ENCODE measurements at regions of chr16 and their contacts with region 1.

Region 1: DNA sequence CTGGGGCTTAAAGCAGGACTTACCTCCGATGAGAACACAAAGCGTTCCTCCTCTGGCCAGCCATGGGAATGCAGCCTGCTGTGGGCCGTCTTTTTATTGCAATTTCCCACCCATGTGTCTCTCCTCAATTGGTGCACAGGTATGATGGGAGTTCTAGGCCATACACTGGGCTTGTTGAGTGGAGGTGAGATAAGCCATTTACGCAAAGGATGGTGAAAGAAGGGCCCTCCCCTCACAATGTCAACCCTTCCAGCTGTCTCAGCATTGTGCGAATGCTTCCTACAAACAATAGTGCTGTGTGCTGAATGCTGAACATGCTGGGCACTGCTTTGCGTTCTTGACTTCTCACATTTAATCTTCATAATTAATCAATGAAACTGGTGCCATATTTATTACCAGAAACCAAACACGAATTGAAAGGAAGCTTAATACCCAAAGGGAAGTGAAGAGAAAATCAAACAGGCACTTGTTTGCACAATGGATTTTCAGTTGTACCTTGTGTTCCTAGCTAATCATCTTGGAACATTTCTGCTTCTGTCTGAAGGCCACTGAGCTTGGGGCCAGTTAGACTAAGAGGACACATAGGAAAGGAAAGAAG is at the start of gene GP2:
- DNase-seq: no peak
- H3K4me3 ChIP-seq: no peak within 1 kb of the TSS
- H3K27ac ChIP-seq: peak within 1 kb of the TSS in 1 of 4 donors; percentile 67
- H3K4me1 ChIP-seq: peaks cover 0 to 5% (median 0%) of the 10 kb centered on the region in 4 donors
- H3K27me3 ChIP-seq: no peaks in the 10 kb centered on the region
- CTCF ChIP-seq: no peak
- EP300 ChIP-seq: no peak
- POLR2A ChIP-seq: no peak
- total RNA-seq, gene GP2: 1.8 to 3.0 (median 2.8) TPM

Region 2: DNA sequence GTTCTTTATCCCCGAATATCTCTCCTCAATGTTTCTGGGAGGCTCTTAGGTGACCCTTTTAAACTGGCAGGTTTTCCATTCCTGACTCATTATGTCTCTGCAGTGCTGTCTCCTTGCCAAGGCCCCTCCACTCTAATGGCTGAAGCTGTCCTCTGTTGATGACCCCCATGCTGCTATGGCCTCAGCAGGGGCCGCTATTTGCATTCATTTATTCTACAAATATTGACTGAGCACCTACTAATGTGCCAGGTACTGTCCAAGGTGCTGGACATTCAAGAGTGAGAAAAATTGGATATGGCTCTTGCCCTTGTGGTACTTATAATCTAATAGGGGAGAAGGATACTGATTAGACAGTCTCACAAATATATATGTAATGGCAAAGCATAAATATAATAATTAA is 55.6 kb before region 1 on chr16:
- in situ Hi-C with region 1: no loop called
- intact Hi-C with region 1: loop called (anchors 10 kb)
- DNase-seq: no peak
- H3K4me3 ChIP-seq: no peak overlapping the region
- H3K27ac ChIP-seq: no peak overlapping the region
- H3K4me1 ChIP-seq: no peaks in the 10 kb centered on the region
- H3K27me3 ChIP-seq: no peaks in the 10 kb centered on the region
- CTCF ChIP-seq: no peak
- EP300 ChIP-seq: no peak
- POLR2A ChIP-seq: no peak

Region 3: DNA sequence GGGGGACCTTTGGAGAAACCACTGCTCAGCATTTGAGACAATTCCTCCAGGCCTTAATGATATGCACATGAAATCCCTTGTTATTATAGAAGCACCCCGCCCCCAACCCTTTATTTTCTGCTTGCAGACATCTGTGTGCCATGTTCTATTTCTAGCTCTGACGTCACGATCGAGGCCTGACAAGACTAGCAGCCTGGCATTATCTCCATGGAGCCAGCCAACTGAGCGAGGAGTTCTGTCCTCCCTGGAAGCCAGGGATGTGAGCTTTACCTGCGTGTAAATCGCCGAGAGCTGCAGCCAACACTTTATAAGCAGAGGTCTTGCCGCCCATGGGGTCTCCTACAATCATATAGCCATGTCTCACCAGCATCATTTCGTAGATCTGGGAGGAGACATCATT is 706.2 kb after region 1 on chr16:
- in situ Hi-C with region 1: no loop called
- intact Hi-C with region 1: no loop called
- DNase-seq: no peak
- H3K4me3 ChIP-seq: no peak overlapping the region
- H3K27ac ChIP-seq: no peak overlapping the region
- H3K4me1 ChIP-seq: no peaks in the 10 kb centered on the region
- H3K27me3 ChIP-seq: no peaks in the 10 kb centered on the region
- CTCF ChIP-seq: no peak
- EP300 ChIP-seq: no peak
- POLR2A ChIP-seq: no peak